K562 (cell line): ENCODE measurements at regions of chr21 and their contacts with region 1.

Region 1: GRCh38 chr21:33314111-33314510 is 10.7 kb upstream of the IFNAR1 start:
- DNase-seq: no peak
- ATAC-seq: no peak
- H3K4me3 ChIP-seq: no peak overlapping the region
- H3K27ac ChIP-seq: no peak overlapping the region
- H3K4me1 ChIP-seq: no peaks in the 10 kb centered on the region; a peak in 2 of 5 replicates
- H3K27me3 ChIP-seq: peaks cover 5 to 10% of the 10 kb centered on the region in 2 experiments; a peak in 4 of 5 replicates
- CTCF ChIP-seq: no peak
- EP300 ChIP-seq: no peak
- POLR2A ChIP-seq: no peak
- RAD21 ChIP-seq: no peak

Region 2: GRCh38 chr21:33299181-33299752 is 14.8 kb before region 1 on chr21:
- CTCF ChIA-PET with region 1: no interaction called
- POLR2A ChIA-PET with region 1: interaction called, 13 read pairs
- in situ Hi-C with region 1: no loop called
- intact Hi-C with region 1: no loop called
- DNase-seq: no peak
- ATAC-seq: peak; percentile 17; the same call in 2 of the 3 replicates
- H3K4me3 ChIP-seq: no peak overlapping the region
- H3K27ac ChIP-seq: no peak overlapping the region
- H3K4me1 ChIP-seq: peaks cover 5 to 34% of the 10 kb centered on the region in 2 experiments
- H3K27me3 ChIP-seq: no peaks in the 10 kb centered on the region
- CTCF ChIP-seq: no peak
- EP300 ChIP-seq: no peak
- POLR2A ChIP-seq: no peak
- RAD21 ChIP-seq: no peak